ENCODE measurements at regions of chr12 and their contacts with region 1.

Region 1: DNA sequence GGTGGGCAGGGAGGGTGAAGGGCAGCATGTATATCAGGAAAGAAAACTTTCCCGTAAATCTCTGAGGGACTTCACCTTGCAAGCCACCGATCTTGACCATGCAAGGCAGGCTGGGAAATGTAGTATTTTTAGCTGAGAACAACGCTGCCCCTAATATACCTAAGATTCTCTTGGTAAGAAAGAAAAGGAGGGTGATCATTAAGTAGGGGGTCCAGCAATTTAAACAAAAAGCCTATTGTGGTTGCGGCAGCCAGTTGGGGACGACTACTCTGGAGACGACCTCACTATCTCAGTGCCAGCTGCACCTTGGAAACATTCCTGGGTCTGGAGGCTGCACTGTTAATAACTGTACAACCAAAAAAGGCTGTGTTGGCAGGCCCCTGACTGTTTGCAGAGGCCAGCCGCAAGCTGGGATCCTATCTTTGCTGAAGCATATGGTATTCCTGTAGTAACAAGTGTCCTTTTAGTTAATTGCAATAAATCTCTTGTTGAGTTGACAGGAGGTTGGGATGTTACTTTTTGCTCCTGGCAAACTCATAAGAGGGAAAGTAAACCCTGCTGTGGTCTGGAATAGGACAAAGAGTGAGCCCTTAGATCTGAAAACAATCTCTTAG is 6.4 kb downstream of the APOLD1 start:
- DNase-seq: peak; percentile 48
- H3K4me3 ChIP-seq: peak overlapping the region; percentile 31; the same call in 1 of the 2 replicates
- H3K27ac ChIP-seq: no peak overlapping the region
- H3K4me1 ChIP-seq: peaks cover 31% of the 10 kb centered on the region
- H3K27me3 ChIP-seq: no peaks in the 10 kb centered on the region

Region 2: DNA sequence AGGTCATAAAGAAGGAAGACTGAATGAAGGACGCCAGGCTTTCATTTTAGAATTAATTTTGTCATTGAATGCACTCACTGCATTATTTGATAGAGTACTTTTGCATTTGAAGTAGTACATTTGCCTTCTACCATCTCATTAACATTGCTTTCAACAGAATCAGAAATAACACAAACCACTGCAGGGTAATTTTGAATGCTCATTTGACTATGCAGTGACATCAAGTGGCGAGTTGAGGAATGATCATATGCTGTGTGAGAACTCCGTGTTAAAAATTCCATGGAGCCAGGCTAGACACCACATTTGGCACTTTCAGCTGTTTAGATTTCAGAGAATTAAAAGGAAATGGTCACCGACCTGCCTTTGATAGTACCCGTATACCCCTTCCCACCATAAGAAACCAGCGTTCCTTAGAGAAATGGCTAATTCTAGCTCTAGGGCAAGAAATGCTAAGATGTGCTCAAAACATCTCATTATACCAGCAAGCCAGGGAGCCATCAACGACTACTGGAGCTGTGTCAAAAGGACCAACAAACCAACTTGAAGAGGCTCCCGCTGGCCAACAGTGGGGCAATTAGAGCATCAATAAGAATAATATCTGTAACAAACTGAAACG is 191.7 kb after region 1 on chr12:
- in situ Hi-C with region 1: loop called (anchors 10 kb)
- DNase-seq: peak; percentile 81
- H3K4me3 ChIP-seq: no peak overlapping the region
- H3K27ac ChIP-seq: 0 out of 2 replicates have a peak overlapping the region, but pooled peaks have one; percentile 3
- H3K4me1 ChIP-seq: peaks cover 22% of the 10 kb centered on the region
- H3K27me3 ChIP-seq: no peaks in the 10 kb centered on the region

Region 3: GRCh38 chr12:13187399-13187798 is 395.5 kb after region 1 on chr12:
- in situ Hi-C with region 1: no loop called
- DNase-seq: peak; percentile 92
- H3K4me3 ChIP-seq: no peak overlapping the region
- H3K27ac ChIP-seq: peak overlapping the region; percentile 48
- H3K4me1 ChIP-seq: peaks cover 23% of the 10 kb centered on the region
- H3K27me3 ChIP-seq: no peaks in the 10 kb centered on the region

Measured in GM23248 (cell line).